ENCODE measurements at regions of chr3 and their contacts with region 1.

Region 1: GRCh38 chr3:19526071-19526470 is 377.8 kb downstream of the KCNH8 start:
- DNase-seq: no peak
- ATAC-seq: no peak
- H3K4me3 ChIP-seq: no peak overlapping the region
- H3K4me3 Mint-ChIP-seq: no peak overlapping the region
- H3K27ac ChIP-seq: no peak overlapping the region
- H3K27ac Mint-ChIP-seq: no peak overlapping the region
- H3K4me1 ChIP-seq: no peaks in the 10 kb centered on the region
- H3K4me1 Mint-ChIP-seq: no peaks in the 10 kb centered on the region
- H3K27me3 ChIP-seq: no peaks in the 10 kb centered on the region
- H3K27me3 Mint-ChIP-seq: no peaks in the 10 kb centered on the region
- CTCF ChIP-seq: no peak

Region 2: DNA sequence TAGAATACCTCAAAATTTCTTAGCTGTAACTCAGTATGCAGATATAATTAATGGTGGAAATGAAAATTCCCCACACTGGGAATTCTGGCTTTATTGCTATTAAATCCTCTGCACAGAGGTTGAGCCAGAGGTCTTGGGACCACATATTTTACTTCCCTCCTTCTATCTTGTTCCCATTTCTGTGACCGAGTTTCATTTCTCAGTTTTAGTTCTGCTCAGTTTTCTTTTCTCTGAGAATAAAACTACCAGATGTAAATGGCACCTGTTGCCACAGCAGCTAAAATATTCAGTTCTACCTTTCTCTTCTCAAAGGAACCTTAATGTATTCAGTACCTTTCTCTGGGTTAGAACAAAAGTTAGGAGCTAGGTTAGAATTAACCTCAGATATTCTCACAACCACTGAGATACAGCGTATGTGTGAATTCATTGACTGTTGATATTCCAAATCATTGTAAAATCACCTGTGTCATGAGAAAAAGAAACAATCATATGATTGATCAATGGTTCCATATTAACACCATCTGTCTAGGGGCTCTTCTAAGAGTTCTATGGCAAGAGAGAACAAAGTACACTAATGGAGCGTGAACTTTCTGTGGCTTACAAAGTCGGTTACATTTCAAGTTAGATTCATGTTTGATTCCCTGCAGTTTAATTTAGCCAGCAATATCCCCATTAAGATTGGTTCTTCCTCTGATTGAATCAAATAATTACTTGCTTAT is 33.8 kb after region 1 on chr3:
- CTCF ChIA-PET with region 1: no interaction called
- POLR2A ChIA-PET with region 1: no interaction called
- intact Hi-C with region 1: loop called in 1 of 2 experiments (anchors 1 kb)
- DNase-seq: no peak
- ATAC-seq: no peak
- H3K4me3 ChIP-seq: no peak overlapping the region
- H3K4me3 Mint-ChIP-seq: no peak overlapping the region
- H3K27ac ChIP-seq: no peak overlapping the region
- H3K27ac Mint-ChIP-seq: no peak overlapping the region
- H3K4me1 ChIP-seq: no peaks in the 10 kb centered on the region
- H3K4me1 Mint-ChIP-seq: no peaks in the 10 kb centered on the region
- H3K27me3 ChIP-seq: no peaks in the 10 kb centered on the region
- H3K27me3 Mint-ChIP-seq: no peaks in the 10 kb centered on the region
- CTCF ChIP-seq: no peak

Measured in CD8-positive, alpha-beta T cell (primary cell).